ENCODE measurements at regions of chr12 and their contacts with region 1.

Region 1: DNA sequence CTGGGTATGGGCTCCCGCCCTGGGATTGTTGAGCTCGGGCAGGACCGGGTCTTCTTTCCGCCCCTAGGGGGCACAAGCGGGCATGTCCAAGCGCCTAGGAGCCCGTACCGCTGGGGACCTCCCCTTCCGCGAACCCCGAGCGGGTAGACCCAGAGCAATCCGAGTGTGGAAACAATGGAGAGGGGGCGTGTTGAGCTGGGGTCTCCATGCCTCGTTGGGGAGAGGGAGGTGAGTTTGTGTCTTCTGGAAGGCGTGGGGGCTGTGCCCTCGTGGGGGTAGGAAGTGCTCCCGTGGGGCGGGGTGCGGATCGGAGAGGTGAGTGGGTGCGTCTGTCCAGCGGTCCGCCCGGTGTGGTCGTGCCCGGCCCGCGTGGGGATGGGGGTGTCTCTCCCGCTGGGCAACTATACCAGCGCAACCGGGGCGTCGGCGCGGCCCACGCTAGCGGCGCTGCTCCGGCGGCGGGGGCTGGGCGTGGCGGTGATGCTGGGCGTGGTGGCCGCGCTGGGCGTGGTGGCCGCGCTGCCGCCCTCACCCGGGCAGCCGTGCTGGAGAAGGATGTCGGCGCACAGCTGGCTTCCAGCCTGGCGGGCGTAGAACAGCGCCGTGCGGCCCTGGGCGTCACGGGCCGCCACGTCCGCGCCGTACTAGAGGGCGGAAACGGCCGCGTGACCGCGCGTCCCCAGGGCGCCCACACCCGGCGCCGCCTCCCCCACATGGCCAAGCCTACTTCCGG is 12.2 kb downstream of the AGAP2 start:
- DNase-seq: peak; percentile 88
- ATAC-seq: peak; percentile 91
- H3K4me3 ChIP-seq: peak overlapping the region; percentile 91
- H3K27ac ChIP-seq: 0 out of 2 replicates have a peak overlapping the region, but pooled peaks have one; percentile 21
- H3K4me1 ChIP-seq: peaks cover 4% of the 10 kb centered on the region; the same call in 1 of the 2 replicates
- H3K27me3 ChIP-seq: no peaks in the 10 kb centered on the region
- CTCF ChIP-seq: peak; percentile 91

Region 2: DNA sequence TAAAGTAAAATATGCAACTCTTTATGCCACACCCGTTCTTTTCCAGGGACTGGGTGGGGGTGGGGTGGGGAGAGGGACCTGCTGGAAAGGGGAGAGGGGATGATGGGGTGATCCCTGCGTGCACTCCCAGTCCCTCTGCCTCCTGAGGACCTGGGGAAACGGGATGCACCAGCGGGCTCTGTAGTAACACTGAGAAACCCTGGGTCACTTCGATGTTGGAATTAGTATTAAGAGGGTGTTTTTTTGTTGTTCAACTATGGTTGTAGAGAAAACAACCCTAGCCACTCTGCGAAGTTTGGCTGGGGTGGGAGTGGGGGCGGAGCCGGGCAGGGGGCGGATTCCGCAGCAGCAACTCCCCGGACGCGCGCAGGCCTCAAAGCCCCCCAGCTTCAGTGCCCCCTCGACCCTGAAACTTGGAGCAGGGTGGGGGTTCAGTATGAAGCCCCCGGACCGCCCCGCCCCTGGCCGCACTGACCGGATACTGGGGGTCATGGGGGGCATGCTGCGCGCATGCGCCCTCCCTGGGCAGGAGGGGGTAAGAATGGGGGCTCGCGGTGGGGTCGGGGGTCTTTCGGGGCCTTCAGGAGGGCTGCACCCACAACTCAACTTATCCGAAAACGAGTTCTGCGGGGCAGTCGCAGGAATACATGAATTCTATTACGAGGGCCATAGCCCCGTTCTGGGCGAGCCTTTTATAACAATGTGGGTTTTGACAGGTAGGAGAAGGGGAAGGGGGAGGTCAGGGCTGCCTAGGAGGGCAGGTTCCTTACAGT is 116.3 kb before region 1 on chr12:
- CTCF ChIA-PET with region 1: interaction called, 11 read pairs
- POLR2A ChIA-PET with region 1: no interaction called
- intact Hi-C with region 1: no loop called
- DNase-seq: no peak
- ATAC-seq: no peak
- H3K4me3 ChIP-seq: no peak overlapping the region
- H3K27ac ChIP-seq: no peak overlapping the region
- H3K4me1 ChIP-seq: peaks cover 14% of the 10 kb centered on the region; the same call in 1 of the 2 replicates
- H3K27me3 ChIP-seq: no peaks in the 10 kb centered on the region
- CTCF ChIP-seq: no peak